K562 (cell line): ENCODE measurements at regions of chr14 and their contacts with region 1.

Region 1: DNA sequence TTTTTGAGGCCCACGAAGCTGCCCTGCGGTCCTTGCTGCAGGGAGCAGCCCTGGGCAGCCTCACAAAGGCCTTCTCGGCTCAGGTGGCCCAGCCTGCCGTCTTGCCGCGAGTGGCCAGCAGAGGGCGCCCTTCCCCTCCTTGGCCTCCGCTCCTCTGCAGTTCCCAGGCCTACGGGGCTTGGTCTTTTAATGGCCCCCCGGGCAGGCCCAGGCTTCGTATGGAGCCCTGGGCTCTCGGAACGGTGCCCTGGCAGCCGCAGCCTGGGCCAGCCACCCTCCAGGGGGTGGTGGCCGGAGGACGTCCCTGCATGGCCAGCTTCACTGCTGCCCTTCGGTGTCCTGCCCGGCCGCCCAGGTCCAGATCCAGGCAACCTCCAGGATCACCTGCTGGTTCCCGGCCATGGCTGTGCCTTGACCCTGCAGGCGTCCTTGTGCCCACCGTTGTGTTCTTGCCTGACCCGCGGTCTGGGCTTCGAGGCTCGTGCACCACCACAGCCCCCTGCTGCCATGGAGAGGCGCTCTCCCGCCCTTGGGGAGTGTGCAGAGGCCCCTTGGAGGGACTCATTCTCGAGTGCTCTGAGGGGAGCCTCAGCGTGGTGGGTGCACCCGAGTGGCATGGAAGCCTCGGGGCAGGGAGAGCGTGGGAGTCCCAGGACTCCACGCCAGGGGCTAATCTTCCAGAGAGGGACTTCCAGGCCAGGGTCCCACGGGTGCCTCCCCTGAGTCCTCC is 9.4 kb downstream of the ASPG start:
- DNase-seq: peak; percentile 64 to 74 (median 70)
- ATAC-seq: peak; percentile 93
- H3K4me3 ChIP-seq: no peak overlapping the region
- H3K27ac ChIP-seq: no peak overlapping the region
- H3K4me1 ChIP-seq: peaks cover 0 to 23% of the 10 kb centered on the region in 2 experiments; a peak in 2 of 5 replicates
- H3K27me3 ChIP-seq: peaks cover 0 to 6% of the 10 kb centered on the region in 2 experiments; a peak in 2 of 5 replicates
- CTCF ChIP-seq: peak; percentile 70 to 79 (median 75)
- EP300 ChIP-seq: no peak
- POLR2A ChIP-seq: no peak
- RAD21 ChIP-seq: peak; percentile 29 to 68; a peak in 3 of 4 replicates

Region 2: GRCh38 chr14:104064003-104064402 is 30.9 kb before region 1 on chr14:
- CTCF ChIA-PET with region 1: no interaction called
- POLR2A ChIA-PET with region 1: no interaction called
- in situ Hi-C with region 1: no loop called
- intact Hi-C with region 1: no loop called
- DNase-seq: no peak
- ATAC-seq: no peak
- H3K4me3 ChIP-seq: no peak overlapping the region
- H3K27ac ChIP-seq: no peak overlapping the region
- H3K4me1 ChIP-seq: no peaks in the 10 kb centered on the region
- H3K27me3 ChIP-seq: no peaks in the 10 kb centered on the region; a peak in 1 of 5 replicates
- CTCF ChIP-seq: no peak
- EP300 ChIP-seq: no peak
- POLR2A ChIP-seq: no peak
- RAD21 ChIP-seq: no peak

Region 3: GRCh38 chr14:104177945-104178678 is 83.2 kb after region 1 on chr14:
- CTCF ChIA-PET with region 1: no interaction called
- POLR2A ChIA-PET with region 1: no interaction called
- in situ Hi-C with region 1: no loop called
- intact Hi-C with region 1: no loop called
- DNase-seq: no peak
- ATAC-seq: no peak; the same call in 2 of the 3 replicates
- H3K4me3 ChIP-seq: no peak overlapping the region
- H3K27ac ChIP-seq: no peak overlapping the region
- H3K4me1 ChIP-seq: peaks cover 0 to 19% of the 10 kb centered on the region in 2 experiments; a peak in 1 of 5 replicates
- H3K27me3 ChIP-seq: peaks cover 0 to 44% of the 10 kb centered on the region in 2 experiments; a peak in 3 of 5 replicates
- CTCF ChIP-seq: no peak
- EP300 ChIP-seq: no peak
- POLR2A ChIP-seq: no peak
- RAD21 ChIP-seq: no peak

Region 4: DNA sequence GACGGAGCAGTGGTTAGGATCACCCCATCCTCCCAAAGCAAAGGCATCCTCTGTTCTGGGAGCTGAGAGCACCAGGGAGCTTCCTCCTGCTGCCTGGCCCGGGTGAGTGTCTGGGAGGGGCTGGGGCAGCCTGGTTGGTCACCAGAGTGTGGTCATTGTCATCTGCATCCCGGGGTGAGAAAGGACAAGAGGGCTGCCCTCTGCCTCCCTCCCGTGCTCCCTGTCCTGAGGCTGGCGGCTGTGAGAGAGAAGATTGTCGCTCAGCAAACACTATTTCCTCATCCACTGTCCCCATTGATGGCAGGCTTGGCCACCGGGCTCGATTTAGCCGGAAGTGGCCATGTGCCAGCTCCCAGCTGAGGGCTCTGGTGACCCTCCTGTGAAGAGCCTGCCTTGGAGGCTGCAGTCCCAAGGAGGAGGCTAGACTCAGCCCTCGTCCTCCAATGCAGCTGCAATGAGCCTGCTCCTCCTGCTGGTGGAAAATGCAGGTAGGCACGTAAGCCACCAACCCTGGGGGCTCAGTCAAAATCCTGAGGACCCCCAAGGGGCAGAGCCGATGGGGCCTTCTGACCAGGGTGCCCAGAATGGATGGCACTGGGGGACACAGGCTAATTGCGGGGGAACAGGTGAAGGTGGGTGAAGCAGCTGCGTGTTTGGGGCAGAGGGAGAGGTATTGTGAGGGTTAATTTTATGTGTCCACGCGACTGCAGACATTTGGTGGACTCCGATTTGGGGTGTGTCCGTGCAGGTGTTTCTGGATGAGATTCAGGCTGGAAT is 199.2 kb after region 1 on chr14:
- CTCF ChIA-PET with region 1: no interaction called
- POLR2A ChIA-PET with region 1: no interaction called
- in situ Hi-C with region 1: no loop called
- intact Hi-C with region 1: no loop called
- DNase-seq: no peak
- ATAC-seq: no peak
- H3K4me3 ChIP-seq: no peak overlapping the region
- H3K27ac ChIP-seq: no peak overlapping the region
- H3K4me1 ChIP-seq: no peaks in the 10 kb centered on the region
- H3K27me3 ChIP-seq: no peaks in the 10 kb centered on the region
- CTCF ChIP-seq: 0 out of 6 replicates have a peak, but pooled peaks of 2 of the 3 experiments have one; percentile 21 to 28
- EP300 ChIP-seq: no peak
- POLR2A ChIP-seq: no peak
- RAD21 ChIP-seq: peak in 1 of 2 experiments; percentile 32; a peak in 1 of 4 replicates

Region 5: DNA sequence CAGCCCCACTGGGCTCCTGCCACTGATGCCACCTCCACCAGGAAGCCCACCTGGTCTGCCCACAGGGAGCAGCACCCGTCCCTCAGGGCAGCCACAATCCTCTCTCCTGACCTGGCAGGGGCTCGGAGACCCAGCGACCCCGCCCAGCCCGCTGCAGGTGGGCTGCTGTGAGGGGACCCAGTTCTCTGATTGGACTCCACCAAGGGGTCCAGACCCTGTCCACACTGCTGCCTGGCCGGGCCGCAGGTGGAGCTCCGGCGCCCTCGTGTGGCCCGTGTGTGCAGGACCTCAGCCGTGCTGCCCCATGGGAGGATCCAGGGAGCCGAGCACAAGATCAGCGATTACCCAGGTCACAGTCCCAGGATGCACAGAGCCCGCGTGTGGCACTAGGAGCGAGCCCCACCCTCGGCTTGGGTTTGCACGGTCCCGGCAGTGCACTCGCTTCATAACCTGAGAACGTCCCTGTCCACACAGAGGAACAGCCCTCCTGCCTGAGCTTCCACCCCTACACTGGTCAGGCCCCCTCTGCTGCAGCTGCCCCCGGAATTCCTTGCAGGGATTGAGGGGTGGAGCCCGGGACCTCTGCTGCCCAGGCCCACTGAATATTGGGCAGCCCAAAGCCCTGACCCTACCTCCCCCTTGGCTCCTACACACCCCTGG is 545.1 kb after region 1 on chr14:
- CTCF ChIA-PET with region 1: interaction called, 12 read pairs
- POLR2A ChIA-PET with region 1: no interaction called
- in situ Hi-C with region 1: no loop called
- intact Hi-C with region 1: no loop called
- DNase-seq: peak; percentile 73 to 83 (median 80)
- ATAC-seq: peak; percentile 99
- H3K4me3 ChIP-seq: no peak overlapping the region
- H3K27ac ChIP-seq: no peak overlapping the region
- H3K4me1 ChIP-seq: peaks cover 0 to 37% of the 10 kb centered on the region in 2 experiments; a peak in 2 of 5 replicates
- H3K27me3 ChIP-seq: peaks cover under 1 to 36% of the 10 kb centered on the region in 2 experiments; a peak in 4 of 5 replicates
- CTCF ChIP-seq: peak; percentile 83 to 89 (median 88)
- EP300 ChIP-seq: no peak
- POLR2A ChIP-seq: no peak
- RAD21 ChIP-seq: peak; percentile 89 to 93